ENCODE measurements at regions of chr17 and their contacts with region 1.

Region 1: GRCh38 chr17:58082870-58083490 is at the start of gene DYNLL2:
- DNase-seq: peak; percentile 78 to 98 (median 90)

Region 2: DNA sequence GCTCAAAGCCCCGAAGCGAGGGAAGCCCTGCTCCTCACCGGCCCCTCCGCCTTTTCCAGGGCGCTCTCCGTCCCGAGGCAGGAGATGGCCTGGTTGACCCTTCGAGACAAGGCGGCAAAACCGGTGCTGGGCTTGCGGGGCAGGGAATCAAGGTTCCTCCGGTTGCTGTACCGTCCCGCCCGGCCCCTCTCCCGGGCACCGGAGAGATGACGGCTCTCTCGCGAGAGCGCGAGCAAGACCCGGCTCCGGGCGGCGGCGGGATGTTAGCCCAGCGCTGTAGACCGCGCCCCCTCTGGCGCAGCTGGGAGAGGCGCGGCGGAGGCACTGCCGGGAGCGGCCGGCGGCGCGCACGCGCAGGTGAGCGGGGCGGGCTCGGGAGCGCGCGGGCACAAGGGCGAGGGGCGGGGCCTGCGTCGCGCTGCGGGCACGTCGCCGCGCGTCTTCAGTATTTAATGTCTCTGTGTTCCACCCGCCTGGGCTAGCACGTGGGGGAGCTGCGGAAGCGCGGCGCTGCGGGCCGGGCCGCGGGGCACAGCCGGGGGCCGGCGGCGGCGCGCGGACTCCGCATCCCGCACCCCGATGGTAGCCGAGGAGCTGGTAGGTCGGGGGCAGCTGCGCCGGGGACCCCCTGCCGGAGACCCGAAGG is 998.1 kb before region 1 on chr17 and contains the start of gene AKAP1:
- intact Hi-C with region 1: loop called (anchors 10 kb)
- DNase-seq: peak; percentile 85 to 99 (median 94)

Region 3: GRCh38 chr17:57849874-57850754 is 232.9 kb before region 1 on chr17 and contains the start of gene MRPS23:
- intact Hi-C with region 1: loop called (anchors 5 kb)
- DNase-seq: peak; percentile 97 to 100 (median 98)

Region 4: GRCh38 chr17:57986841-57987579 is 96.0 kb before region 1 on chr17:
- intact Hi-C with region 1: no loop called
- DNase-seq: peak in 3 of 10 donors; percentile 16 to 89 (median 56)

Region 5: GRCh38 chr17:58006924-58007780 is 75.8 kb before region 1 on chr17 and contains the start of gene SRSF1:
- intact Hi-C with region 1: loop called (anchors 5 kb)
- DNase-seq: peak; percentile 91 to 99 (median 96)

Region 6: GRCh38 chr17:58189436-58190146 is 106.6 kb after region 1 on chr17:
- intact Hi-C with region 1: no loop called
- DNase-seq: peak in 9 of 10 donors; percentile 20 to 95 (median 54)

Measured in posterior cingulate gyrus (tissue), 11 donors.